CD8-positive, alpha-beta memory T cell (primary cell): ENCODE measurements at regions of chr3 and their contacts with region 1.

Region 1: GRCh38 chr3:118884748-118885206 is 149.9 kb downstream of the IGSF11 start:
- DNase-seq: peak; percentile 54 to 76 (median 64)
- H3K4me3 ChIP-seq: no peak overlapping the region
- H3K4me3 Mint-ChIP-seq: no peak overlapping the region
- H3K27ac ChIP-seq: no peak overlapping the region
- H3K27ac Mint-ChIP-seq: no peak overlapping the region
- H3K4me1 ChIP-seq: no peaks in the 10 kb centered on the region
- H3K4me1 Mint-ChIP-seq: peaks cover 0 to 5% (median 4%) of the 10 kb centered on the region in 3 donors
- H3K27me3 ChIP-seq: no peaks in the 10 kb centered on the region
- H3K27me3 Mint-ChIP-seq: peaks cover 6 to 47% of the 10 kb centered on the region in 2 donors

Region 2: DNA sequence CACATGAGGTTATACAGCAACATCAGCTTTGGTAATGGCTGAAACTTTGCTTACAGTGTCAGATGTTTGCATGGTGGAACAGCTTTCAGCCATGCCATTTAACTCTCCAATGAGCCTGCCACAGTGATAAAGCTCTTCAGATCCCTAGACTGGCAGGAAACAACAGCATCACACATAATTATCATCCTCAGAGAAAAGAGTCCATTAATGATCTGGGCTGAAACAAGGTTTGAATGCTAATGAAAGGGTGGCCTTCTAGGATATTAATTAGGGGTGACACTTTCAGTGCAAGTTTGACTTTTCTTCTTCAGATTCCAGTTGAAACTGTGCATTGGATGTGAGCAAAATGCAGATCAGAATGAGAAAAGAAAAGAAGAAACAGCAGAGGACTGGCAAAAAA is 16.7 kb before region 1 on chr3:
- CTCF ChIA-PET with region 1: interaction called, 34 read pairs
- POLR2A ChIA-PET with region 1: no interaction called
- DNase-seq: no peak
- H3K4me3 ChIP-seq: no peak overlapping the region
- H3K4me3 Mint-ChIP-seq: no peak overlapping the region
- H3K27ac ChIP-seq: no peak overlapping the region
- H3K27ac Mint-ChIP-seq: no peak overlapping the region
- H3K4me1 ChIP-seq: no peaks in the 10 kb centered on the region
- H3K4me1 Mint-ChIP-seq: no peaks in the 10 kb centered on the region
- H3K27me3 ChIP-seq: no peaks in the 10 kb centered on the region
- H3K27me3 Mint-ChIP-seq: peaks cover 13 to 51% of the 10 kb centered on the region in 2 donors

Region 3: DNA sequence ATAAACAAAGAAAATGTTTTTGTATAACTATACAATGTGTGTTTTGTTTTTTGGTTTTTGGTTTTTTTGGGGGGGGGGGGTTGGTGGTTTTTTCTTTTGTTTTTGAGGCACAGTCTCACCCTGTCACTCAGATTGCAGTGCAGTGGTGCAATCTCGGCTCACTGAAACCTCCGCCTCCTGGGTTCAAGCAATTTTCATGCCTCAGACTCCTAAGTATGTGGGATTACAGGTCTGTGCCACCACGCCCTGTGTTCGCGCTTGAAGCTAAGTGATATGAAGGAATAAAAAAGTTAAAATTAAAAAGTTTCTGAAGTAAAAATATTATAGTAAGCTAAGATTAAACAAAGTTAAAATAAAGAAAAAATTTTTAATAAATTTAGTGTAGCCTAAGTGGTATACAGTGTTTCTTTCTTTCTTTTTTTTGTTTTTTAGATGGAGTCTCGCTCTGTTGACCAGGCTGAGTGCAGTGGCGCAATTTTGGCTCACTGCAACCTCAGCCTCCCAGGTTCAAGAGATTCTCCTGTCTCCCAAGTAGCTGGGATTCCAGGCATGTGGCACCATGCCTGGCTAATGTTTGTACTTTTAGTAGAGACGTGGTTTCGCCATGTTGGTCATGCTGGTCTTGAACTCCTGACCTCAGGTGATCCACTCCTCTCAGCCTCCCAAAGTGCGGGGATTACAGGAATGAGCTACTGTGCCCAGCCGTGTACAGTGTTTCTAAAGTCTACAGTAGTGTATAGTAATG is 207.3 kb after region 1 on chr3:
- CTCF ChIA-PET with region 1: interaction called, 38 read pairs
- POLR2A ChIA-PET with region 1: no interaction called
- DNase-seq: no peak
- H3K4me3 ChIP-seq: no peak overlapping the region
- H3K4me3 Mint-ChIP-seq: no peak overlapping the region
- H3K27ac ChIP-seq: no peak overlapping the region
- H3K27ac Mint-ChIP-seq: no peak overlapping the region
- H3K4me1 ChIP-seq: no peaks in the 10 kb centered on the region
- H3K4me1 Mint-ChIP-seq: no peaks in the 10 kb centered on the region
- H3K27me3 ChIP-seq: no peaks in the 10 kb centered on the region
- H3K27me3 Mint-ChIP-seq: peaks cover 3 to 4% of the 10 kb centered on the region in 2 donors

Region 4: GRCh38 chr3:119240591-119241434 is 356.0 kb after region 1 on chr3 and contains the start of gene B4GALT4:
- CTCF ChIA-PET with region 1: interaction called, 73 read pairs
- POLR2A ChIA-PET with region 1: no interaction called
- DNase-seq: peak; percentile 57 to 75 (median 67)
- H3K4me3 ChIP-seq: peak within 1 kb of the TSS; percentile 69
- H3K4me3 Mint-ChIP-seq: peak within 1 kb of the TSS; percentile 70 to 93 (median 83)
- H3K27ac ChIP-seq: peak within 1 kb of the TSS; percentile 75
- H3K27ac Mint-ChIP-seq: peak within 1 kb of the TSS; percentile 70 to 96 (median 92)
- H3K4me1 ChIP-seq: peaks cover 38% of the 10 kb centered on the region
- H3K4me1 Mint-ChIP-seq: peaks cover 43 to 51% (median 48%) of the 10 kb centered on the region in 3 donors
- H3K27me3 ChIP-seq: no peaks in the 10 kb centered on the region
- H3K27me3 Mint-ChIP-seq: peaks cover under 1 to 2% of the 10 kb centered on the region in 2 donors
- total RNA-seq, gene B4GALT4: 17.9 to 18.0 TPM

Region 5: GRCh38 chr3:119676771-119677640 is 792.2 kb after region 1 on chr3 and contains the start of gene COX17:
- CTCF ChIA-PET with region 1: interaction called, 19 read pairs
- POLR2A ChIA-PET with region 1: no interaction called
- DNase-seq: peak; percentile 94 to 99 (median 95)
- H3K4me3 ChIP-seq: peak within 1 kb of the TSS; percentile 78
- H3K4me3 Mint-ChIP-seq: peak within 1 kb of the TSS; percentile 82 to 97 (median 85)
- H3K27ac ChIP-seq: peak within 1 kb of the TSS; percentile 76
- H3K27ac Mint-ChIP-seq: peak within 1 kb of the TSS; percentile 90 to 99 (median 96)
- H3K4me1 ChIP-seq: peaks cover 16% of the 10 kb centered on the region
- H3K4me1 Mint-ChIP-seq: peaks cover 38 to 45% (median 41%) of the 10 kb centered on the region in 3 donors
- H3K27me3 ChIP-seq: no peaks in the 10 kb centered on the region
- H3K27me3 Mint-ChIP-seq: no peaks in the 10 kb centered on the region
- total RNA-seq, gene COX17: 105 to 108 TPM